Activated T-helper 1 cell treated with anti-CD3 and anti-CD28 coated beads, Interleukin-12 subunit alpha, Interleukin-12 subunit beta, Interleukin-2, Interleukin-4 antibody, amounts not matched to agents 30 ng/mL and 10 ng/mL and 1 ng/mL, durations not matched to agents 14 hours and 24 hours and 36 hours (primary cell): ENCODE measurements at regions of chr5 and their contacts with region 1.

Region 1: DNA sequence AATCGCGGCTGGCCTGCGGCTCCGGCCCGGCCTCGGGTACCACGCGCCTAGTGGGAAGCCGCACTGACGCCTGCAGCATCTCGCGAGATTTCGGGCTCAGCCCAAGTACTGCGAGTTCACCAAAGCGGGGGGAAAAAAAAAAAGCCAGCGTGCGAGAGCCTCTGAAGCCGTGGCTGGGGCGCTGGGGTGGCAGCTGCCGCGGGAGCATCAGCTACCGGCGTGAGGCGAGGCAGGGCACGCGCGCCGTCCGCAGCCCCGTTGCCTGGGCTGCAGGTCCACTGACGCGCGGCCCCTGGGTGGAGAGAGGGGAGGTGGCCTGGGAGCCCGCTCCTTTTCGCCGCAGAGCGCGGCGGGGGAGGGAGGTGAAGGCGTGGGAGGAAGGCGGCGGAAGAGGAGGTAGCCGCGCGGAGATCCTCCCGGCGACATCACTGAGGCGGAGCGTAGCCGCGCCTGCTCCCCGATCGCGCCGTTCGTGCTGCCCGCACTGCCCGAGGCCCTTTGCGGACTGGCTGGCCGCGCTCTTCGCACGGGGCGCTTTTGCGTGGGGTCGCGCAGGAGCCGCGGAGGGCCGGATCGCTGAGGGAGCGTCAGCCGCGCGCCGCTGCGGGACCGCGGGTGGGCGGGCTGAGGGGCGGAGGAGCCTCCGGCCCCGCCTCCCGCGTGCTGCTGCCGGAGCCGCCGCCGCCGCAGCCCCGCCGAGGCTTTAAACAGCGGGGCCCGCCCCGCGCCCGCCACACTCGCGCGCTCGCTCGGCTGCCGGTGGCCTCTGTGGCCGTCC is at the start of gene SLC12A2:
- DNase-seq: peak; percentile 87
- H3K4me3 Mint-ChIP-seq: peak within 1 kb of the TSS; percentile 93
- H3K27ac Mint-ChIP-seq: peak within 1 kb of the TSS; percentile 96
- H3K4me1 Mint-ChIP-seq: peaks cover 70% of the 10 kb centered on the region
- H3K27me3 Mint-ChIP-seq: no peaks in the 10 kb centered on the region
- total RNA-seq, gene SLC12A2: 23.9 and 24.8 TPM in 2 replicates

Region 2: DNA sequence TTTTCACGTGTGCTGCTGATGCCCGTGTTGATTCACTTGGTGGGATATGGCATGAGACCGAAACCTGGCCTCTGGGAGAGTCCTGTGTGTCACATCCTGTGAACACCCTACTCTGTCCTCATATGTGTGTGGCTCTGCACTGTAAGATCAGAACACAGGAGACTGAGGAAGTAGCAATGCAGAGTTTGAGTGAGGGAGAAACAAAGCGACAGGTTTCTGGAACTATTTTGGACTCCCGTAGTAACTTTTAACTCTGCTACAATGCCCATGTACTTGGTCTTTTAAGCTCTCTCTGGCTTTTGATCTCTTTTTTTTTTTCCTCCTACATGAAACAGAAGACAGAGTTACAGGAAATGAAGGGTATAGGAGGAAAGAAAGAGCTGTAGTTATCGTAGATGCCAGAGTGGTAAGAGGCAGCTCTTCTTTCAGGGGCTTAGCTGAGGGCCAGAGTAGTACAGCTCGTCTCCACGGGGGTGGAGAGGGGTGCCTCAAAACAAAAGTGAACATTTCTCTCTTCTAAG is 1633.4 kb before region 1 on chr5:
- intact Hi-C with region 1: loop called (anchors 10 kb)
- DNase-seq: peak; percentile 60
- H3K4me3 Mint-ChIP-seq: peak overlapping the region; percentile 85
- H3K27ac Mint-ChIP-seq: peak overlapping the region; percentile 100
- H3K4me1 Mint-ChIP-seq: peaks cover 67% of the 10 kb centered on the region
- H3K27me3 Mint-ChIP-seq: no peaks in the 10 kb centered on the region

Region 3: DNA sequence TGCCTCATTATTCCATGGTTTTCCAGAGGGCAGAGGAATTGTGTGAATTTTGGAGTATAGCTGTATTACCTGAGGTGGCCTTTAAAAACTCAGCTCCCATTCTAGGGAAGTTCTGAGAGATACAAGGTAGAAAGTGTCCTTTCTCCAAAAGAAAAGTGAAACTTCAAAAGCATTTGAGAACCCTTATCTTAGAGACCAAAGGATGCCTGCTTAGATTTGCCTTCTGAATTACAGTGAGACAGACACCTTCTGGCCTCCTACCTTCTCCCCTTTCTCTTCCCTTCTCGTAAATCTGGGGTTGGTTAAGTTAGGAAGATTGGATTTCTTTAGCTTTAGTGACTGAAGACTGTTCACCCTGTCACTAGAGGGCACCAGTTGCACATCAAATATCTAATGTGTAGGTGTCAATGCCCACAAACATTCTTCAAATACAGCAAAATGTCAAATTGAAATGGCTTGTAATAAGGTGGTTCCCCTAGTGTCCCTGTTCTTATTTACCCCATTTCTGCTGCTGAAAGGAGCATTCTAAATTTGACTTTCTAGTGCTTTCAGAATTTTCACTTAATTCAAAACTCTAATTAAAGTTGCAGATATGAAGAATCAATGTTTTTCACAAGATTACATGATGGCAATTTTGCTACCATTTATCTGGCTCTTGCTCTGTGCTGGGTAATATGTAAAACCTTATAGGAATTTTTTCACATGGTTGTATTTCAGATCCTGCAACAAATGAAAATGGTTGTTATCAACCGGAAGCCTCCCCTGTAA is 519.0 kb before region 1 on chr5:
- intact Hi-C with region 1: loop called (anchors 5 kb)
- DNase-seq: peak; percentile 16
- H3K4me3 Mint-ChIP-seq: no peak overlapping the region
- H3K27ac Mint-ChIP-seq: no peak overlapping the region
- H3K4me1 Mint-ChIP-seq: peaks cover 15% of the 10 kb centered on the region
- H3K27me3 Mint-ChIP-seq: peaks cover 11% of the 10 kb centered on the region

Region 4: GRCh38 chr5:127785098-127785927 is 297.9 kb before region 1 on chr5:
- intact Hi-C with region 1: loop called (anchors 1 kb)
- DNase-seq: peak; percentile 55
- H3K4me3 Mint-ChIP-seq: peak overlapping the region; percentile 62
- H3K27ac Mint-ChIP-seq: peak overlapping the region; percentile 96
- H3K4me1 Mint-ChIP-seq: peaks cover 45% of the 10 kb centered on the region
- H3K27me3 Mint-ChIP-seq: peaks cover 3% of the 10 kb centered on the region

Region 5: GRCh38 chr5:128097781-128098180 is 14.6 kb after region 1 on chr5:
- intact Hi-C with region 1: loop called (anchors 1 kb)
- DNase-seq: no peak
- H3K4me3 Mint-ChIP-seq: no peak overlapping the region
- H3K27ac Mint-ChIP-seq: no peak overlapping the region
- H3K4me1 Mint-ChIP-seq: peaks cover 10% of the 10 kb centered on the region
- H3K27me3 Mint-ChIP-seq: no peaks in the 10 kb centered on the region

Region 6: DNA sequence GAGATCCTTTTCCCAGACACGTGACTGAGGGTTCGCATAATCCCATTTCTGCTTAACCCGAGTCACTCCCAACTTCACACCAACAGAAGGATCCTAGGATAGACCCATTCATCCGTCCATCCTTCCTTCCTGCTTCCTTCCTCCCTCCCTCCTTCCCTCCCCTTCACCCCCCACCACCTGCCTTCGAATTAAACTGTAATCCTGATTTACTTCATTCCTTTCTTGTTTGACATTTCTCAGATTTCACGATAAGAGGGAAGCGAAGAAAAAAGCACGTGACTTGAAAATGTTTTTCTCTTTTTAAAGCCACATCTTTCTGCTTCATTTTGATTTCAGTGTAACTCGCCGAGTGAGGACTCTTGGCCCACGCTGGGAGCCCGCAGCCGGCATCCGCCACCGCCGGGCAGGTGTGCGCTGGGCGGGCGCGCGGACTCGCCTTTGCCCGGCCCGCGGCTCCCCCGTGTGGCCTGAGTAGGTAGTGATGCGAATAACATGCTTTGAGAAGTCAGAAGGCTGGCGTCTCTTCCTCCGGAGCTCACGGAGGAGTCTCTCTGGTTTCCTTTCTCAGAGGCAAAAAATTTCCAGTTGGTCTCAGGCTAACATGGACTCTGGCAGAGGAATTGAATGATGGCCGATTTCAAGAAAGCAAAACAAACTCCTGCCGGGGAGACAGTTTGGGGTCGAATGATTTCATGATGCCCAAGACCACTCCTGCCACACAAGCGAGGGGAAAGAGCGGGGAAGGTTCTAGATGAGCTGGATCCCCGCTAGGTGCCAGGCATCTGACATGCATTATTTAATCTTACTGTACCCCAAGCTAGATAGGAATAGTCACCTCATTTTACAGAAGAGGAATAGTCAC is 118.1 kb after region 1 on chr5:
- intact Hi-C with region 1: loop called (anchors 1 kb)
- DNase-seq: peak; percentile 71
- H3K4me3 Mint-ChIP-seq: no peak overlapping the region
- H3K27ac Mint-ChIP-seq: no peak overlapping the region
- H3K4me1 Mint-ChIP-seq: peaks cover 23% of the 10 kb centered on the region
- H3K27me3 Mint-ChIP-seq: peaks cover 17% of the 10 kb centered on the region